ENCODE measurements at regions of chr11 and their contacts with region 1.

Region 1: DNA sequence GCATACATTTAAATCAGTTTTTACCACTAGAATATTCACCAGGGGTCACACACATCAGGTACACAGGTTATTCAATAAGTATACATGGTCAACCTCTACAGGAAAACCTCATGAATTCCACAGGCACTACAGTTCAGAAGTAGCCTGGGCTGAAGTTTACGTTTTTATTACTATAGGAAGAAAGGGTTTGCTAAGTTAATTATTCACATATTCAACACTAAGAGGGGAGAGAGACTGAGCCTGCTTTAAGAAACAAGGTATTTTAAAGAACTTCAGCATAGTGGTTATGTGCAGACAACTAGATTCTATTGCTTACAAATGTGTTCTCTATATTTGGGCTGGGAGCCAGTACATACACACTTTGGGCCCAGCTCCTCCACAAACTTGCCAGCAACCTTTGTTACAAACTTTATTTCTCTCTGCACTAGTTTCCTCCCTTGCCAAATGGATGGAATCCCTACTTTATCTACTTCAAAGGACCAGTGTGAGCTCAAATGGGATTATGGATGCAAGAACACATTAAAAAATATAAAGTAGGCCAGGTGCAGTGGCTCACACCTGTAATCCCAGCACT is 31.9 kb downstream of the IL18BP start:
- H3K4me3 Mint-ChIP-seq: no peak overlapping the region
- H3K27ac Mint-ChIP-seq: no peak overlapping the region
- H3K4me1 Mint-ChIP-seq: peaks cover 24% of the 10 kb centered on the region
- H3K27me3 Mint-ChIP-seq: no peaks in the 10 kb centered on the region

Region 2: GRCh38 chr11:72091005-72091691 is 60.6 kb after region 1 on chr11:
- intact Hi-C with region 1: loop called (anchors 1 kb)
- H3K4me3 Mint-ChIP-seq: no peak overlapping the region
- H3K27ac Mint-ChIP-seq: peak overlapping the region; percentile 79
- H3K4me1 Mint-ChIP-seq: peaks cover 31% of the 10 kb centered on the region
- H3K27me3 Mint-ChIP-seq: no peaks in the 10 kb centered on the region

Region 3: DNA sequence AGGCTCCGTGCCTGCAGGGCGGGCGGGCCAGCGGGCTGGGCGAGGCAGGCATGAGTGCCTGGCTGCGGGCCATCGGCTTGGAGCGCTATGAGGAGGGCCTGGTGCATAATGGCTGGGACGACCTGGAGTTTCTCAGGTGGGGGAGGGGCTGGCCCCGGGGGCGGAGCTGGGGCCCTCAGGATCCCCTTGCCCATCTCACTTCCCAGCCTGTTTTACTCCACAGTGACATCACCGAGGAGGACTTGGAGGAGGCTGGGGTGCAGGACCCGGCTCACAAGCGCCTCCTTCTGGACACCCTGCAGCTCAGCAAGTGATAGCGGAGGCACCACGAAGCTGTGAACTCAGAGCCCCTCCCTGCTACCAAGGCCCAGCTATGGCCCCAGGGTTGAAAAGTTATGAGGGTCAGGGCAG is 207.5 kb after region 1 on chr11:
- intact Hi-C with region 1: loop called (anchors 5 kb)
- H3K4me3 Mint-ChIP-seq: no peak overlapping the region
- H3K27ac Mint-ChIP-seq: no peak overlapping the region
- H3K4me1 Mint-ChIP-seq: peaks cover 82% of the 10 kb centered on the region
- H3K27me3 Mint-ChIP-seq: peaks cover 51% of the 10 kb centered on the region

Region 4: DNA sequence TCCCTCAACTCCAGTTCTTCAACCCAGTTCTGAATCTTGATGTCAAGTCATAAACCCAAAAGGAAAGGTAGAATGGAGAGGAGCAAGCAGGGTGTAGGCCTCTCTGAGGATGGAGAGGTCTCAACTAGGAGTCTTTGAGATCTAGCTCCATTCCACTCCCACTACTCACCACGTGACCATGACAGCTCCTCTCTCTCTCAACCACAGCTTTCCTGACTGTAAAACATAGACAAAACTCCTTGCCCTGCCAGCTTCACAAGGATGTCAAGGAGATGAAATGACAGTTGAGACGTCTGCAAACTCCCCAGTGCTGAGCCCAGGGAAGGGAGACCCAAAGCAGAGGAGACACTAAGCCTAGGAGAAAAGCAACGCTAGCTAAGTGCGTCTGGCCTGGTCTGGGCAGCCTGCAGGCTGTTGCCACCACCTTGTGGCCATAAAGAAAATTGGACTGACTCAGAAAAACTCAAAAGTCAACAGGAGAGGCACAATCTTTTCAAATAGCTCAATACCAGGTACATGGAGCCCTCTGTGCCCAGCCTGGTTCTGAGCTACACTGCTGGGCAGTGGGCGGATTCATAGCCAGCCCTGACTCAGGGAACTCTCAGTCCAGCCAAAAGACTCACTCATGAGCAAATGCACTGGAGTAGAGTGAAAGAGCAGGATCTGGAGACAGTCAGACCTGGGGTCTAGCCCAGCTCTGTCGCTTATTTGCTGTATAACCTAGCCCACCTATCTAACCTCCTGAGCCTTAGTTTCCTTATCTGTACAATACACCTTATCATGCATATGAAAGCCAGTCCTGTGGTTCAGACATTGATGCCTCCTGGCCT is 400.4 kb after region 1 on chr11:
- intact Hi-C with region 1: loop called (anchors 1 kb)
- H3K4me3 Mint-ChIP-seq: peak overlapping the region; percentile 64
- H3K27ac Mint-ChIP-seq: peak overlapping the region; percentile 77
- H3K4me1 Mint-ChIP-seq: peaks cover 59% of the 10 kb centered on the region
- H3K27me3 Mint-ChIP-seq: no peaks in the 10 kb centered on the region